ENCODE measurements at regions of chr2 and their contacts with region 1.

Region 1: DNA sequence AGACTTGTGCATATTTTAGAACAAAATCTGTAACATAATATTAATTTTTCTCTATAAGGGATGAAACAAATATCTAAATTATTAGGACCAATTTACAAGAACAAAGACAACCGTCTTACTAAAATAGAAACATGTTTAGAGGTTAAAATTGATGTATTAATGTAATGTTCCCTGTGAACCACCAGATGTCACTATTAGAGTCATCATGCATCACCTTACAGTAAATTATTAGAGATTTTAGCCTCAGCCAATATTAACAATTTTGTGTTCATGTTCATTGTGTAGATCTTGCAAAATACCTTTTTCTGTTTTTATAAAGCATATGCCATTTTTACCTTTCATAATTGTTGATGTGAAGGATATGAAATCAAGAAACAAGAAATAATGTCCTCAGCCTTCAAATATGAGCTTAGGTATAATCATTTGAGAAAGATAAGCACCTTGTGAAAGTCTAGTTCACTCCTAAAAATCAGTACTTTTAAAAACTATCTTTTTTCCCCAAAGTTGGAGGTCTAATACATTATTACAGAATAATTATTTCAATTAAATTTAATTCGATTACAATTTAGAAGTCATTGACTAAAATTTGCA is 344.3 kb upstream of the KCNH7 start:
- DNase-seq: peak; percentile 21
- H3K4me3 ChIP-seq: no peak overlapping the region
- H3K27ac ChIP-seq: no peak overlapping the region
- H3K4me1 ChIP-seq: no peaks in the 10 kb centered on the region
- H3K27me3 ChIP-seq: peaks cover 9% of the 10 kb centered on the region
- CTCF ChIP-seq: peak; percentile 70

Region 2: GRCh38 chr2:163878531-163879117 is 695.8 kb after region 1 on chr2:
- CTCF ChIA-PET with region 1: no interaction called
- POLR2A ChIA-PET with region 1: no interaction called
- intact Hi-C with region 1: loop called (anchors 10 kb)
- DNase-seq: peak; percentile 56
- H3K4me3 ChIP-seq: no peak overlapping the region
- H3K27ac ChIP-seq: no peak overlapping the region
- H3K4me1 ChIP-seq: no peaks in the 10 kb centered on the region
- H3K27me3 ChIP-seq: no peaks in the 10 kb centered on the region
- CTCF ChIP-seq: peak; percentile 88

Region 3: GRCh38 chr2:164495491-164496223 is 1312.8 kb after region 1 on chr2:
- CTCF ChIA-PET with region 1: no interaction called
- POLR2A ChIA-PET with region 1: no interaction called
- intact Hi-C with region 1: loop called (anchors 5 kb)
- DNase-seq: peak; percentile 64
- H3K4me3 ChIP-seq: no peak overlapping the region
- H3K27ac ChIP-seq: no peak overlapping the region
- H3K4me1 ChIP-seq: no peaks in the 10 kb centered on the region
- H3K27me3 ChIP-seq: peaks cover 37% of the 10 kb centered on the region
- CTCF ChIP-seq: peak; percentile 62

Measured in A673 (cell line).